Activated CD4-positive, alpha-beta T cell treated with anti-CD3 and anti-CD28 coated beads for 36 hours (primary cell): ENCODE measurements at regions of chr20 and their contacts with region 1.

Region 1: DNA sequence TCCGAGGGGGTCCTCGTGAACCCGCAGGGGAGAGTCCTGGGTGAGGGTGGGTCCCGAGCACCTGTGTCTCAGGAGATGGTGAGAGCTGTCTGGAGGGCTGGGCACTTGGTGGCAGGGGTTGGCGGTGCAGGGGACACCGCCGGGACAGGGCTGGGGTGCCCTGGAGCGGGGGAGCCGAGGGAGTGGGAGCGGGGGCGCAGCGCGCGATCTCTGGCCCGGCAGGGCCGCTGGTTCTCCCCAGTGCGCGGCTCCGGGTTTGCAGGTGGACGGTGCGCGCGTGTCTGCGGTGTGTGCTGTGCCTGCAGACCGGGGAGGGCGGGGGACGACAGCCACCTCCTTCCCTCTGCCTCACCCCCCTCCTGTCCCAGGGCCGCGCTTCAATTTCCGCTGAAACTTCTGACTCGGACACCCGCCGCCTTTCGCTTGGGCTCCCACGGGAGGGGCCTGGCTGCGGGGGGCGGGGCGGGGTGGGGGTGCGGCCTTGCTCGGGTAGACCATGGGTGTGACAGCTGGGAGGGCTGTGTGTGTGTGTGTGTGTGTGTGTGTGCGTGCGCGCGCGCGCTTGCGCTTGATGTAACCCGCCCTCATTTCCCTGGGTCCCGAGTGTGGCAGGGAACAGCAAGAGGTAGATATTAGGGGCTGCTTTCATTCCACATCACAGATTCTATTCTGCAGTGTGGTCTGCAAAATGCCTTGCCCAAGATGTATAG is 1.2 kb downstream of the TRIB3 start:
- DNase-seq: peak; percentile 88
- ATAC-seq: peak; percentile 70
- H3K4me3 Mint-ChIP-seq: peak overlapping the region; percentile 81
- H3K27ac Mint-ChIP-seq: peak overlapping the region; percentile 83
- H3K4me1 Mint-ChIP-seq: peaks cover 14% of the 10 kb centered on the region
- H3K27me3 Mint-ChIP-seq: no peaks in the 10 kb centered on the region

Region 2: GRCh38 chr20:347640-348484 is 33.9 kb before region 1 on chr20:
- CTCF ChIA-PET with region 1: interaction called, 3 read pairs
- POLR2A ChIA-PET with region 1: no interaction called
- intact Hi-C with region 1: loop called in 1 of 2 experiments (anchors 2 kb)
- DNase-seq: peak; percentile 78
- ATAC-seq: peak; percentile 76
- H3K4me3 Mint-ChIP-seq: peak overlapping the region; percentile 82
- H3K27ac Mint-ChIP-seq: peak overlapping the region; percentile 42
- H3K4me1 Mint-ChIP-seq: peaks cover 10% of the 10 kb centered on the region
- H3K27me3 Mint-ChIP-seq: no peaks in the 10 kb centered on the region

Region 3: DNA sequence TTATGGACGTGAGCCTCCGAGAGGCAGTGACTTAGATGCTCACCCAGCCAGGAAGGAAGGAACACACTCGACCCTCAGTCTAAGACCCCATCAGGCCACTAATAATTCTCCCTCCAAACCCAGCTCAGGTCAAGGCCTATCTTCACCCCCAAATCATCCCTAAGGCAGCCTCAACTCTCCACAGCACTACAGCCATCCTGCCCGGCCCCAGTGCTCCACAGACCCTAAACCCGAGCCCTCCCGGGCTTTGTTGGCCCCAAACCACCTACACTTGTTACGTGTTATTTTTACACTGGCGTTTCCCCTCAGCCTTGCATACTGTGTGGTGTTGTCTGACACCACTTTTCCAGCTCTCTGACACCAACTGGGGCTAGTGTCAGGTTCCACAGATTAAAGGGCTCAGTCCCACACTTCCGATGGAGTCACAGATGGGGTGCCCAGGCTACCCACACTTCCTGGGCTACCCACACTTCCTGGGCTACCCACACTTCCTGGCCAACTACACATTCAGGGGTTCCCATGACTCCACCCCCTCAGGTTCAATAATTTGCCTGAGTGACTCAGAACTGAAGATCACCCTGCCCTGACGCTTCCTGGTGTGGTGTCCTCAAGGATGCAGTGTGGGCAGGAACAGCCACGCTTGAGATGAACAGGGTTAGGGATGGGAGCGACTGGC is 51.7 kb after region 1 on chr20:
- CTCF ChIA-PET with region 1: interaction called, 3 read pairs
- POLR2A ChIA-PET with region 1: no interaction called
- intact Hi-C with region 1: loop called in 1 of 2 experiments (anchors 1 kb)
- DNase-seq: peak; percentile 86
- ATAC-seq: peak; percentile 86
- H3K4me3 Mint-ChIP-seq: peak overlapping the region; percentile 51
- H3K27ac Mint-ChIP-seq: peak overlapping the region; percentile 94
- H3K4me1 Mint-ChIP-seq: peaks cover 67% of the 10 kb centered on the region
- H3K27me3 Mint-ChIP-seq: no peaks in the 10 kb centered on the region

Region 4: DNA sequence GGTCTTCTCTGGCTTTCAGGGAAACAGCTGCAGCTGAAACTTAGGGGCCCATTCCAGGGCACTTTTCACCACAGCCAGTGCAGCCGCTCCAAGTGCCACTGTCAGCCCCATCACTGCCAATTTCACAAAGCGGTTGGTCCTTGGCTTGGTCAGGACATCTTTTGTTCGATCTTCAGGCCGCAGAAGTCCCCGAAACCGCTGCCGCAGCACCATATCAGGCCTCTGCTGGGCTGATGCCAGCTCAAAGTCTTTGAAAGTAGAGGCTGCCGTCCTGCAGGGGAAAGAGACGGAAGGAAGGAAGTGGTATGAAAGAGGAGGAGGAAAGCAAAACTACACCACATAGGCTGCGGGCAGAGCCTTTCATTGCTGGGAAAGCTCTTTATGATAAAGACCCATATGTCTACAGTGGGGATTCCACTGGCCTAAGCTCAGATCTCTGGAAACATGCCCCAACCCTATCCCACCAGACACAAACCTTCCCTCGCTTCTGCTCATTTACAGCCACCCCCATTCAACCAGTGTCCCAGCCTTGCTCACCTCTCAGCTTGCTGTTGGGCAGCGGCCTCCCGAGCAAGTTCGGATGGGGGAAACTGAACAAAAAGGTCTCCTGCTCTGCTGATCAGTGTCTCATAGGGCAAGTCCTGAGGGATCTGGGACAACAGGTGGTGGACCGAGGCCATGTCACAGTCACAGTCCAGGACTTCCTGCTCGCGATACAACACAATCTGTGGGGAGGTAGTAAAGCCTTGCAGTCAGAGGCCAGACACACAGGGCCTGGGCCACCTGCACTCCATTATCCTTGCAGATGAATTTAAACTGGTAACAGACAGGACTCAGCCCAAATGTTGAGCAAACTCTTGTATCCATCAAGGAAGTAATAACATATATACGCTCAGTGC is 57.1 kb after region 1 on chr20:
- CTCF ChIA-PET with region 1: no interaction called
- POLR2A ChIA-PET with region 1: no interaction called
- intact Hi-C with region 1: loop called in 1 of 2 experiments (anchors 2 kb)
- DNase-seq: peak; percentile 71
- ATAC-seq: peak; percentile 78
- H3K4me3 Mint-ChIP-seq: peak overlapping the region; percentile 60
- H3K27ac Mint-ChIP-seq: peak overlapping the region; percentile 88
- H3K4me1 Mint-ChIP-seq: peaks cover 58% of the 10 kb centered on the region
- H3K27me3 Mint-ChIP-seq: no peaks in the 10 kb centered on the region